ENCODE measurements at regions of chr10 and their contacts with region 1.

Region 1: DNA sequence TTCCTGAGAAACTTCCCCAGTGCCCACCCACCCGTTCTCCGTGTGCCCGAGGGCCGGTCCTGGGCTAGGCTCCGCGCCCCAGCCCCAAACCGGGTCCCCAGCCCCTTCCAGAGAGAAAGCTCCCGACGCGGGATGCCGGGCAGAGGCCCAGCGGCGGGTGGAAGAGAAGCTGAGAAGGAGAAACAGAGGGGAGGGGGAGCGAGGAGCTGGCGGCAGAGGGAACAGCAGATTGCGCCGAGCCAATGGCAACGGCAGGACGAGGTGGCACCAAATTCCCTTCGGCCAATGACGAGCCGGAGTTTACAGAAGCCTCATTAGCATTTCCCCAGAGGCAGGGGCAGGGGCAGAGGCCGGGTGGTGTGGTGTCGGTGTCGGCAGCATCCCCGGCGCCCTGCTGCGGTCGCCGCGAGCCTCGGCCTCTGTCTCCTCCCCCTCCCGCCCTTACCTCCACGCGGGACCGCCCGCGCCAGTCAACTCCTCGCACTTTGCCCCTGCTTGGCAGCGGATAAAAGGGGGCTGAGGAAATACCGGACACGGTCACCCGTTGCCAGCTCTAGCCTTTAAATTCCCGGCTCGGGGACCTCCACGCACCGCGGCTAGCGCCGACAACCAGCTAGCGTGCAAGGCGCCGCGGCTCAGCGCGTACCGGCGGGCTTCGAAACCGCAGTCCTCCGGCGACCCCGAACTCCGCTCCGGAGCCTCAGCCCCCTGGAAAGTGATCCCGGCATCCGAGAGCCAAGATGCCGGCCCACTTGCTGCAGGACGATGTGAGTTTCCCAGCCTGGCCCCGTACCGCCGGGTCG is at the start of gene SCD:
- DNase-seq: peak; percentile 95

Region 2: GRCh38 chr10:100433253-100434240 is 86.6 kb after region 1 on chr10:
- in situ Hi-C with region 1: loop called (anchors 25 kb)
- DNase-seq: peak; percentile 96

Measured in ACHN (cell line).